Activated B cell treated with CpG ODN at 0.5 μM for 24 hours (primary cell): ENCODE measurements at regions of chr22 and their contacts with region 1.

Region 1: DNA sequence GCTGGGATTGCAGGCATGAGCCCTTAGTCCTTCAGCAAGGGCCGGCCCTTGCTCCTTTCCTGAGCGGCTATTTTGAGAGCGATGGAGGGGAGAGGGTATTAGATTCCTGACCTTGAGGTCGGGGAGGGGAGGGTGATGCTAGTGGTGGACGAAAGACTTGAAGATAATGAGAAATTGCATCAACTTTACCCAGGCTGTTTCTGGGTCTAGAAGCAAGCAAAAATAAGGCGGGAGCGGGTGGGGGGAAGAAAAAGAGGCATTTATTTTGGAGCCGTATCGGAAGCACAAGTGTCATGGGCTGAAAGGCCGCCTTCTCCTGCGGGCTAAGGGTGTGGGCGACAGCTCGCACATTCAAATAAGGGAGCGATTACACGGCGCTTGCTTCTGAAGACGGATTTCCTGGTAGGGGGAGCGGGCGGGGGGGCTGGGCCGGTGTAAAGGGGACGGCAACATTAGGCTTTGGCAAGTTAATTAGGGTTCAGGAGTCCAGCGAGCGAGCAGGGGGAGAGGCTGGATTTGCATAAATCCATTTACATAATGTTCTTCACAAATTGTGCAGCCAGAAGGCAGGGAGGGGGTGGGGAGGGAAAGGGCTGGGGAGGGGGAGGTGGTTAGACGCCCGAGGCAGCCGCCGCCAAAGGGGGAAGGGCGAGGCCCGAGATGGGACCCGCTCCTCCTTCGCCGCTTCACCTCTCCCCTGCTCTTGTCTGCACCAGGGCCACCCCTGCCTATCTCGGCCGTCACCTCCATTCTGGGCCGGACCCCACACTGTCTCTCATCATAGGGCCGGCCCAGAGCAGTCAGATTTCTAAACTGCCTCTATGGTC is 245.9 kb downstream of the MIAT start:
- DNase-seq: no peak
- ATAC-seq: no peak
- H3K4me3 Mint-ChIP-seq: peak overlapping the region; percentile 79
- H3K27ac Mint-ChIP-seq: no peak overlapping the region
- H3K4me1 Mint-ChIP-seq: peaks cover 20% of the 10 kb centered on the region
- H3K27me3 Mint-ChIP-seq: peaks cover 24% of the 10 kb centered on the region
- CTCF ChIP-seq: no peak

Region 2: GRCh38 chr22:26679003-26679629 is 224.1 kb before region 1 on chr22:
- CTCF ChIA-PET with region 1: no interaction called
- POLR2A ChIA-PET with region 1: no interaction called
- intact Hi-C with region 1: loop called (anchors 1 kb)
- DNase-seq: peak; percentile 52
- ATAC-seq: peak; percentile 87
- H3K4me3 Mint-ChIP-seq: no peak overlapping the region
- H3K27ac Mint-ChIP-seq: no peak overlapping the region
- H3K4me1 Mint-ChIP-seq: peaks cover 54% of the 10 kb centered on the region
- H3K27me3 Mint-ChIP-seq: no peaks in the 10 kb centered on the region
- CTCF ChIP-seq: no peak